Activated T-helper 2 cell treated with anti-CD3 and anti-CD28 coated beads, Interferon-gamma antibody, Interleukin-2, Interleukin-4, amounts not matched to agents 10 μg/mL and 5 μg/mL and 100 μg/mL, durations not matched to agents 14 hours and 24 hours and 36 hours (primary cell): ENCODE measurements at regions of chr4 and their contacts with region 1.

Region 1: GRCh38 chr4:54658252-54659093 is 716 bp downstream of the KIT start:
- DNase-seq: peak; percentile 12
- H3K4me3 Mint-ChIP-seq: peak overlapping the region; percentile 74
- H3K27ac Mint-ChIP-seq: no peak overlapping the region
- H3K4me1 Mint-ChIP-seq: peaks cover 8% of the 10 kb centered on the region
- H3K27me3 Mint-ChIP-seq: peaks cover 72% of the 10 kb centered on the region

Region 2: GRCh38 chr4:54107951-54108873 is 550.3 kb before region 1 on chr4:
- intact Hi-C with region 1: loop called (anchors 5 kb)
- DNase-seq: no peak
- H3K4me3 Mint-ChIP-seq: no peak overlapping the region
- H3K27ac Mint-ChIP-seq: no peak overlapping the region
- H3K4me1 Mint-ChIP-seq: peaks cover 14% of the 10 kb centered on the region
- H3K27me3 Mint-ChIP-seq: peaks cover 79% of the 10 kb centered on the region

Region 3: GRCh38 chr4:54234497-54235207 is 423.8 kb before region 1 on chr4:
- intact Hi-C with region 1: no loop called
- DNase-seq: no peak
- H3K4me3 Mint-ChIP-seq: no peak overlapping the region
- H3K27ac Mint-ChIP-seq: no peak overlapping the region
- H3K4me1 Mint-ChIP-seq: peaks cover 11% of the 10 kb centered on the region
- H3K27me3 Mint-ChIP-seq: peaks cover 41% of the 10 kb centered on the region

Region 4: DNA sequence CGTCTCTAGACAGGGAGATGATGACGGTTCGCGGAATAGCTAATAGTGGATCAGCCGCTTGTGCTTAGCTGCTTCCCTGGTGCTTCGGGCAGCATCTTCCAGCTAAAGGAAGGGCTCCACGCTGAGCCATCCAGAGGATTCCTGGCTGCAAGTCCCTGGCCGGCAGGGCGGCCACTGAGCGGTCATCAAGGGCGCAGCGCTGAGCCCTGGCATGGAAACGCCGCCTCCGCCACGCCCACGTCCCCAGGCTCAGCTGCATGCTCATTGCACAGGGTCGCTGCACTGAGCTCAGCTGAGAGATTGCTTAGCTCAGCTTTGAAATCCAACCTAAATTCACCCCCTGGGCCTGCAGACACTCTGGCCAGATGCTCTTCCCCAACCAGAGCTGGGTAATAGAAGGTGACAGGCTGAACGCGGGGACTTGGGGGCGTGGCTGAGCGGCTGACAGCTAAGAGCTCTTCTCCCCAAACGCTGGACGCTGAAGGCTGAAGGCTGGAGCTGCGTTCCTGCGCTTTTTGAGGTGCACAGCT is 118.9 kb before region 1 on chr4:
- intact Hi-C with region 1: loop called (anchors 10 kb)
- DNase-seq: no peak
- H3K4me3 Mint-ChIP-seq: peak overlapping the region; percentile 27
- H3K27ac Mint-ChIP-seq: no peak overlapping the region
- H3K4me1 Mint-ChIP-seq: peaks cover 7% of the 10 kb centered on the region
- H3K27me3 Mint-ChIP-seq: peaks cover 7% of the 10 kb centered on the region